Activated naive CD4-positive, alpha-beta T cell treated with anti-CD3 and anti-CD28 coated beads for 36 hours (primary cell): ENCODE measurements at regions of chr1 and their contacts with region 1.

Region 1: DNA sequence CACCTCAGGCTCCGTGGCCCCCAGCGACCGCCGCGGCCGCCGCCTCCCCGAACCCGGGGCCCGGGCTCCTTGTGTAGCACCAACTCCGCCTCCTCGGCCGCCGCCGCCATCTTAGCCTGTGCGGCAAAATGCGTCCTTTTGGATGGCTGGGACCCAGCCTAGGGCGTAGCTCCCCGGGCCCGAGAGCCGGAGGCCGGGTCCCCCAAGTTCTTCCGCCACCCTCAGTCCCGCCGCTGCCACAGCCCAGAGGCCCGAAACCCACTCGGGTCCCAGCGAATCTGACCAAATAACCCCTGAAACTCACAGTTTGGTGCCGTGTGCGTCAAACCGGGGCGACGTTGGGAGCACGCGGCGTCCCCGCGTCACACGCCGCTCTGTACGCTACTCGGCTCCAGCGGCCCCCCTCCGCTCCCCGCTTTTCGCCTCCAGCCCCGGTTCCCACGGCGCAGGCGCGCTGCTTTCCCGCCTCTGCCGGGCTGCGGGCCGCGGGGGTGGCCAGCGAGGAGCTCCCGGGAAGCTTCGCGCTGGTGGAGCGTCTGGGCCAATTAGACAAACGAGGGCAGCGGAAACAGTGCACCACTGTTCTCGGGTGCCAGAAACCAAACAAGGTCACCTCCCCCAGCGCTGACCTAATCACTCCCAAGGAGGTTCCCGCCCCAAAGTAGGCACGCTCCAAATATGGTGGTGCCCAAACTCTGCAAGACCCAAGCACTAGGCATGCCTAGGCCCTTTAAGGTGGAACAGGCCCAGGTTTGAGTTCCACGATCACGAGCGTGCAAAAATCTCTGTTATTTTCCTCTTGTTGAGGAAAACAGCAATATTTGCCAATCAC is at the start of gene ZNF644:
- DNase-seq: peak; percentile 97
- H3K4me3 Mint-ChIP-seq: peak within 1 kb of the TSS; percentile 91
- H3K27ac Mint-ChIP-seq: peak within 1 kb of the TSS; percentile 96
- H3K4me1 Mint-ChIP-seq: peaks cover 72% of the 10 kb centered on the region
- H3K27me3 Mint-ChIP-seq: no peaks in the 10 kb centered on the region
- total RNA-seq, gene ZNF644: 42.4 to 42.8 TPM

Region 2: GRCh38 chr1:90721210-90722194 is 300.4 kb before region 1 on chr1:
- CTCF ChIA-PET with region 1: interaction called, 3 read pairs
- intact Hi-C with region 1: loop called (anchors 2 kb)
- DNase-seq: peak; percentile 72
- H3K4me3 Mint-ChIP-seq: no peak overlapping the region
- H3K27ac Mint-ChIP-seq: no peak overlapping the region
- H3K4me1 Mint-ChIP-seq: peaks cover 58% of the 10 kb centered on the region
- H3K27me3 Mint-ChIP-seq: peaks cover 83% of the 10 kb centered on the region

Region 3: DNA sequence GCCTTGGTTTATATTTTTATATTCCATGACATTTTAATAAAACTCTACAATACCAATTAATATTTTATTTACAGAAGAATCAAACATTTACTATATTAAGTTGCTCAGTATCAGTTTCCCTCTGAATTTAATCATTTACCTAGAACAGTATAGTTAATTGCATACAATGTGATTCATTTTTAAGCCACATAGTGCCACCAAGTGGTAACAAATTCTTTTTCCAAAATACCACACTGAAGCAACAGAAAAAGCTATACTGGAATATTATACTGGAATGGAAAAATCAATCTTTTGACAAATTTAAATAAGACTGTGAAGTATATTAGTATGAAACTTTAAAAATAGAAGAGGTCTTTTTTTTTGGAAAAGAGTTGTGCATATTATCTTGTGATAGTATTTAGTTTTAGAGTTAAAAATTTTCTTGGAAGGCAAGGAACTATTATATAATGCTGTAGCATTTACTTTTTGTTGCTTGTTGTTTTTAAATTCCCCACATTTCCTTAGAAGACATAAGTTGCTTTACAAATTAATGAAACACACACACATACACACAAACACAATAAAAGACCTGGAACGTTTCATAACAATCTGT is 57.4 kb before region 1 on chr1:
- CTCF ChIA-PET with region 1: no interaction called
- intact Hi-C with region 1: loop called (anchors 10 kb)
- DNase-seq: no peak
- H3K4me3 Mint-ChIP-seq: no peak overlapping the region
- H3K27ac Mint-ChIP-seq: no peak overlapping the region
- H3K4me1 Mint-ChIP-seq: peaks cover 40% of the 10 kb centered on the region
- H3K27me3 Mint-ChIP-seq: no peaks in the 10 kb centered on the region

Region 4: GRCh38 chr1:91038582-91038981 is 16.7 kb after region 1 on chr1:
- CTCF ChIA-PET with region 1: no interaction called
- intact Hi-C with region 1: no loop called
- DNase-seq: no peak
- H3K4me3 Mint-ChIP-seq: no peak overlapping the region
- H3K27ac Mint-ChIP-seq: no peak overlapping the region
- H3K4me1 Mint-ChIP-seq: no peaks in the 10 kb centered on the region
- H3K27me3 Mint-ChIP-seq: no peaks in the 10 kb centered on the region

Region 5: GRCh38 chr1:91404151-91405012 is 382.5 kb after region 1 on chr1 and contains the start of gene HFM1:
- CTCF ChIA-PET with region 1: no interaction called
- intact Hi-C with region 1: loop called (anchors 10 kb)
- DNase-seq: peak; percentile 63
- H3K4me3 Mint-ChIP-seq: peak within 1 kb of the TSS; percentile 72
- H3K27ac Mint-ChIP-seq: no peak within 1 kb of the TSS
- H3K4me1 Mint-ChIP-seq: peaks cover 2% of the 10 kb centered on the region
- H3K27me3 Mint-ChIP-seq: peaks cover 42% of the 10 kb centered on the region
- total RNA-seq, gene HFM1: not detected

Region 6: GRCh38 chr1:91673613-91674012 is 651.7 kb after region 1 on chr1:
- CTCF ChIA-PET with region 1: no interaction called
- intact Hi-C with region 1: loop called (anchors 5 kb)
- DNase-seq: no peak
- H3K4me3 Mint-ChIP-seq: no peak overlapping the region
- H3K27ac Mint-ChIP-seq: peak overlapping the region; percentile 73
- H3K4me1 Mint-ChIP-seq: peaks cover 28% of the 10 kb centered on the region
- H3K27me3 Mint-ChIP-seq: no peaks in the 10 kb centered on the region

Region 7: DNA sequence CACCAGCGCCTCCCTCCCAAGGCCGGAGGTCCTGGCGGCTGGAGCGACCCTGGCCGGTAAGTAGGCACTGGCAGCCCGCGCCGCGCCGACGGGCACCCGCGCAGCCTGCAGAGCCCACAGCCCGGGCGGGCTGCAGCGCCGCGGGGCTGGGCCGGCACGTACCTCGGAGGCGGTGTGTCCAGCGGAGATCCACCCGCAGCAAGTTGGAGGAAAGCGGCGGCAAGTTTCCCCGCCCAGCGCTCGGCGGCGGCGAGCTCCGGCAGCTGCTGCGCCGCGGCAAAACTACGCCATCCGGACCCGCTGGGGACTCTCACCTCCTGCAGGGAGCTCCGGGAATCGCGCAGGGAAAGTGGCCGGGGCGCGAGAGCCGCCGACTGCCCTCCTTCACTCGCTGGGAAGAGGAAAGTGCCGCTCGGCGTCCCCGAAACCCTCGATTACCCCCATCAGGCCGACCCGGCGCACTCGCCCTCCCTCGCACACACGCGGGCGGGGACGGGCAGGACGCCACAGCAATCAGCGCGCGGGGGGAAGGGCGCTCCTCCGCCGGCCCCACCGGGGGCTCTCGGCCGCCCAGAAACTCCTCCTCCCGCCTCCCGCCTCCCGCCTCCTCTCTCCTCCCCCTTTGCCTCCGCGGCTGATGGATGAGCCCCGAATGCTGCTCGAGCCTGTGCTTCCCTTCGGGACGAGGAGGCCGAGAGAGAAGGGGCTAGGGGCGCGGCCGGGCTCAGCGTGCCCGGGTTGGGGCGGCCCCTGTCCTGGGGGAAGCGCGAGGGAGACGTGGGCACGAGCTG is 864.0 kb after region 1 on chr1 and contains the start of gene TGFBR3:
- CTCF ChIA-PET with region 1: interaction called, 3 read pairs
- intact Hi-C with region 1: loop called (anchors 5 kb)
- DNase-seq: peak; percentile 74
- H3K4me3 Mint-ChIP-seq: peak within 1 kb of the TSS; percentile 85
- H3K27ac Mint-ChIP-seq: peak within 1 kb of the TSS; percentile 46
- H3K4me1 Mint-ChIP-seq: peaks cover 33% of the 10 kb centered on the region
- H3K27me3 Mint-ChIP-seq: peaks cover 15% of the 10 kb centered on the region
- total RNA-seq, gene TGFBR3: 3.2 to 3.3 TPM